Activated T-helper 1 cell treated with anti-CD3 and anti-CD28 coated beads, Interleukin-12 subunit alpha, Interleukin-12 subunit beta, Interleukin-2, Interleukin-4 antibody, amounts not matched to agents 30 ng/mL and 10 ng/mL and 1 ng/mL, durations not matched to agents 14 hours and 24 hours and 36 hours (primary cell): ENCODE measurements at regions of chr2 and their contacts with region 1.

Region 1: DNA sequence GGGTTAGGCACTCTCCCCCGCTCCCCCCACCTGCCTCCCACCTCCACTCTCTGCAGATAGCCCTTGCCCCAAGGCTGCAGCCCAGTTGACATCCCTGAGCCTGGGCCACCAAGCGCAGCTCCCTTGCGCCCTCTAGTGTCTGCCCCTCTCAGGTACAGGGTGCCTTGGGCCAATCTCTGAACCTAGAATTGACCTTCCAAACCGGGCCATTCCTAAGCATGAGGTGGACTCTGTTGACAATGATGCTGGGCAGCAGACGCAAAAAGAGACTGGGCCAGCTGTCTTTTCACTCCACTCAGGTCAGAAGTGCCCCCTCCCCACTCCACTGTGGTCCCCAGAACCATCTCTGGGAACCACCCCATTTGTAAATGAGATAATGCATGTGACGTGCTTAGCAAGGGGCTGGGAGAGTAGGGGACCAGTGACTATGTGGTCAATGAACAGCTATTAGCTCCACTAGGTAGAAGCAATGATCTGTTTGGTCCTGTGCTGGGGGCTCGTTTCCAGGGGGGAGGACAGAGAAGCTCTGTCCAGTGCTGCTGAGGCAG is 43.3 kb upstream of the PLB1 start:
- DNase-seq: peak; percentile 67
- H3K4me3 Mint-ChIP-seq: no peak overlapping the region
- H3K27ac Mint-ChIP-seq: no peak overlapping the region
- H3K4me1 Mint-ChIP-seq: peaks cover 40% of the 10 kb centered on the region
- H3K27me3 Mint-ChIP-seq: peaks cover 4% of the 10 kb centered on the region

Region 2: GRCh38 chr2:27754138-27754588 is 698.4 kb before region 1 on chr2:
- intact Hi-C with region 1: loop called (anchors 1 kb)
- DNase-seq: peak; percentile 62
- H3K4me3 Mint-ChIP-seq: no peak overlapping the region
- H3K27ac Mint-ChIP-seq: no peak overlapping the region
- H3K4me1 Mint-ChIP-seq: no peaks in the 10 kb centered on the region
- H3K27me3 Mint-ChIP-seq: peaks cover 4% of the 10 kb centered on the region

Region 3: GRCh38 chr2:28155627-28156026 is 297.0 kb before region 1 on chr2:
- intact Hi-C with region 1: loop called (anchors 10 kb)
- DNase-seq: no peak
- H3K4me3 Mint-ChIP-seq: no peak overlapping the region
- H3K27ac Mint-ChIP-seq: no peak overlapping the region
- H3K4me1 Mint-ChIP-seq: no peaks in the 10 kb centered on the region
- H3K27me3 Mint-ChIP-seq: no peaks in the 10 kb centered on the region

Region 4: GRCh38 chr2:28276076-28276618 is 176.5 kb before region 1 on chr2:
- intact Hi-C with region 1: loop called (anchors 1 kb)
- DNase-seq: no peak
- H3K4me3 Mint-ChIP-seq: peak overlapping the region; percentile 41
- H3K27ac Mint-ChIP-seq: peak overlapping the region; percentile 30
- H3K4me1 Mint-ChIP-seq: peaks cover 61% of the 10 kb centered on the region
- H3K27me3 Mint-ChIP-seq: peaks cover 6% of the 10 kb centered on the region

Region 5: DNA sequence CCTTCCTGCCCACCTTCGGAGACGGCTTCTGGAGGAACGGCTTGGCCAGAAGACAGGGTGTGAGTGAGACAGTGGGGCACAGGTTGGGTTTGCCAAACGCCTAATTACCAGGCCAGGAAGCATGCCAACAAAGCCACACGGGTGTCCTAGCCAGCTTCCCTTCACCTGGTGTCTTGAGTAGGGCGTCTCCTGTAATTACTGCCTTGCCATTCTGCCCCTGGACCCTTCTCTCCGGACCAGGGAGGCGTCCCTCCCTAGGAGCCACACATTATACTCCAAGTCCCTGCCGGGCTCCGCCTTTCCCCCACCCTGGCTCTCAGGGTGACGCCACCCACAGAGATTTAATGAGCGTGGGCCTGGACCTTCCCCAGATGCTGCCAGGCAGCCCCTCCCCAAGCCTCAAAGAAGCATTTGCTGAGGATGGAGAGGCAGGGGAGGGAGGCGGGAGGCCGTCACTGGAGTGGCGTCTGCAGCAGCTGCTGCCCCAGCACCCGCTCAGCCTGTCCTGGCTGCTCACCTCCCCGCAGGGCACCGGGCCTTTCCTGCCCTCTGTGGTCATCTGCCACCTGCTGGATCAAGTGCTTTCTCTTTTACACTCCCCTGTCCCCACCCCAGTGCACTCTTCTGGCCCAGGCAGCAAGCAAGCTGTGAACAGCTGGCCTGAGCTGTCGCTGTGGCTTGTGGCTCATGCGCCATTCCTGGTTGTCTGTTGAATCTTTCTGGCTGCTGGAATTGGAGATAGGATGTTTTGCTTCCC is 39.3 kb before region 1 on chr2:
- intact Hi-C with region 1: loop called (anchors 1 kb)
- DNase-seq: no peak
- H3K4me3 Mint-ChIP-seq: no peak overlapping the region
- H3K27ac Mint-ChIP-seq: no peak overlapping the region
- H3K4me1 Mint-ChIP-seq: peaks cover 44% of the 10 kb centered on the region
- H3K27me3 Mint-ChIP-seq: no peaks in the 10 kb centered on the region